Mammary epithelial cell (primary cell): ENCODE measurements at regions of chr4 and their contacts with region 1.

Region 1: GRCh38 chr4:165873298-165874071 is 448 bp downstream of the TLL1 start:
- DNase-seq: peak; percentile 56
- H3K4me3 ChIP-seq: peak overlapping the region; percentile 85 to 93 (median 92)
- H3K27ac ChIP-seq: peak overlapping the region; percentile 18
- H3K4me1 ChIP-seq: peaks cover 23% of the 10 kb centered on the region
- H3K27me3 ChIP-seq: no peaks in the 10 kb centered on the region
- CTCF ChIP-seq: no peak

Region 2: DNA sequence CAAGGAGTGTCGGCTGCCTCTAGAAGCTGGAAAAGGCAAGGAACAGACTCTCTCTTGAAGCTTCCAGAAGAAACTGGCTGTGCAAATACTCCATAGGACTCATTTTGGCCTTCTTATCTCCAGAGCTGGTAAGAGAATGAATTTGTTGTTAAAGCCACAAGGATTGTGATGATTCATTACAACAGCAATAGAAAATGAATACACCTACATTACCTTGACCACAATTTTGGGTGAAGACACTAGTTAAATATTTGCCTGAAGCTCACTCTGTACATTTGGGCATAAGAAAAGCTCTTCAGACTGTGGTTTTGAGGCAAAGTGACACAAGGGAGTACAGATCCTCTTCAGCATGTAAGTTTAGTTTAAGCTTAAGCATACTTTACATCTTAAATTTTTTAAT is 134.9 kb before region 1 on chr4:
- CTCF ChIA-PET with region 1: no interaction called
- dilution Hi-C with region 1: no loop called
- in situ Hi-C with region 1: no loop called
- intact Hi-C with region 1: loop called (anchors 1 kb)
- DNase-seq: peak; percentile 96
- H3K4me3 ChIP-seq: peak overlapping the region; percentile 40 to 75 (median 59)
- H3K27ac ChIP-seq: peak overlapping the region; percentile 93
- H3K4me1 ChIP-seq: peaks cover 26% of the 10 kb centered on the region
- H3K27me3 ChIP-seq: no peaks in the 10 kb centered on the region
- CTCF ChIP-seq: no peak

Region 3: GRCh38 chr4:165965513-165965912 is 92.0 kb after region 1 on chr4:
- CTCF ChIA-PET with region 1: interaction called, 16 read pairs
- dilution Hi-C with region 1: no loop called
- in situ Hi-C with region 1: no loop called
- intact Hi-C with region 1: loop called (anchors 1 kb)
- DNase-seq: peak; percentile 68
- H3K4me3 ChIP-seq: no peak overlapping the region
- H3K27ac ChIP-seq: peak overlapping the region; percentile 93
- H3K4me1 ChIP-seq: peaks cover 32% of the 10 kb centered on the region
- H3K27me3 ChIP-seq: no peaks in the 10 kb centered on the region
- CTCF ChIP-seq: no peak

Region 4: DNA sequence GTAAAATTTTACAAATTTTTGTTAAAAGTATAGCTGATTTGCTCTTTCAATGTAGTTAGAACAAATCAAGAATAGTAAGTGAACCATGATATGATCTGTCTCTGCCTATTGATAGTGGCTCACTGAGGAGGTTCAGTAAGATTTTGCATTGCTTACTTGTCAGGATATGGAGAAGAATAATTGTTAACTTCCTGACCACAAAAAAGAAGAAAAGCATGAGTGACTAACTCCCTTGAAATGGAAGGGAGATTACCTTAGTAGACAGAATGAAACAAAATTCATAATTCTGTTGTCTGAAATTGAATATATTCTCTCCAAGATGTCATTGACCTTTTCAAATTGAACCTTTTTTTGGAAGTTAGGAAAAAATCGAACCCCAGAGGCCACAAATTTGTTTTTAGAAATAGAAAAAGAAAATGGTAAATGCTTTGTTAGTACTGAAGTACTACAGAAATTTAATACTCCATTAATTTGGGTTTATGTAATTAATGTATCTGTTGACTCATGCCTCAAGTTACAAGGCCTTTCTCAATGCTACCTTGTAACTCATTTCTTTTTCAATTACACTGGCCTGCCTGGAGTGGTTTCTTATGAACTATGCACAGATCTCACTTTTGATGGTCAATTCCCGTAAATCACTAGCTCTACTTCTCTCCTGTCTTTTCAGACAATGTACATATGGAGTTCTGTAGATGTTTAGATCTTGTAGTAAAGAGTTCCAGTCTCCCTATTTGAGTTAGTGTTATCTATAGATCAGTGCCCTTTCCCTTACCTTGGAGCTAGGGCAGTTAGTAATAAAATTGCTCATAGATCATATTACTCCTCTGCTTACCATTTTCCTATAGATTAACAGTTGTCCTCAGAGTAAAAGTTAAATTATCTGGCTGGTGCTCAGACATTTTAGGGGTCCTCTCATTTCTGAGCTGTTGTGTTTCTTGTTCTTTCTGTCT is 138.9 kb after region 1 on chr4:
- CTCF ChIA-PET with region 1: no interaction called
- dilution Hi-C with region 1: no loop called
- in situ Hi-C with region 1: no loop called
- intact Hi-C with region 1: loop called (anchors 1 kb)
- DNase-seq: peak; percentile 73
- H3K4me3 ChIP-seq: no peak overlapping the region
- H3K27ac ChIP-seq: peak overlapping the region; percentile 75
- H3K4me1 ChIP-seq: peaks cover 12% of the 10 kb centered on the region
- H3K27me3 ChIP-seq: no peaks in the 10 kb centered on the region
- CTCF ChIP-seq: no peak

Region 5: GRCh38 chr4:166064721-166065120 is 191.2 kb after region 1 on chr4:
- CTCF ChIA-PET with region 1: no interaction called
- dilution Hi-C with region 1: no loop called
- in situ Hi-C with region 1: no loop called
- intact Hi-C with region 1: loop called (anchors 1 kb)
- DNase-seq: peak; percentile 58
- H3K4me3 ChIP-seq: peak overlapping the region in 1 of 3 experiments; percentile 11
- H3K27ac ChIP-seq: peak overlapping the region; percentile 51
- H3K4me1 ChIP-seq: peaks cover 18% of the 10 kb centered on the region
- H3K27me3 ChIP-seq: no peaks in the 10 kb centered on the region
- CTCF ChIP-seq: no peak

Region 6: GRCh38 chr4:166091912-166092510 is 218.5 kb after region 1 on chr4:
- CTCF ChIA-PET with region 1: interaction called, 11 read pairs
- dilution Hi-C with region 1: no loop called
- in situ Hi-C with region 1: loop called in 1 of 2 experiments (anchors 25 kb)
- intact Hi-C with region 1: loop called (anchors 2 kb)
- DNase-seq: peak; percentile 17
- H3K4me3 ChIP-seq: no peak overlapping the region
- H3K27ac ChIP-seq: no peak overlapping the region
- H3K4me1 ChIP-seq: no peaks in the 10 kb centered on the region
- H3K27me3 ChIP-seq: no peaks in the 10 kb centered on the region
- CTCF ChIP-seq: peak; percentile 73 to 74